Caco-2 (cell line): ENCODE measurements at regions of chr20 and their contacts with region 1.

Region 1: GRCh38 chr20:36399147-36399968 is 93.2 kb downstream of the DLGAP4 start:
- DNase-seq: peak; percentile 86 to 87
- H3K4me3 ChIP-seq: no peak overlapping the region
- H3K4me3 Mint-ChIP-seq: no peak overlapping the region
- H3K27ac Mint-ChIP-seq: no peak overlapping the region
- H3K4me1 ChIP-seq: no peaks in the 10 kb centered on the region
- H3K4me1 Mint-ChIP-seq: no peaks in the 10 kb centered on the region
- H3K27me3 ChIP-seq: no peaks in the 10 kb centered on the region
- H3K27me3 Mint-ChIP-seq: peaks cover 12% of the 10 kb centered on the region
- CTCF ChIP-seq: peak; percentile 69 to 72

Region 2: GRCh38 chr20:36199345-36200257 is 199.8 kb before region 1 on chr20:
- CTCF ChIA-PET with region 1: interaction called, 14 read pairs
- POLR2A ChIA-PET with region 1: no interaction called
- intact Hi-C with region 1: no loop called
- DNase-seq: peak; percentile 90 to 93
- H3K4me3 ChIP-seq: no peak overlapping the region
- H3K4me3 Mint-ChIP-seq: no peak overlapping the region
- H3K27ac Mint-ChIP-seq: no peak overlapping the region
- H3K4me1 ChIP-seq: no peaks in the 10 kb centered on the region
- H3K4me1 Mint-ChIP-seq: no peaks in the 10 kb centered on the region
- H3K27me3 ChIP-seq: no peaks in the 10 kb centered on the region
- H3K27me3 Mint-ChIP-seq: no peaks in the 10 kb centered on the region
- CTCF ChIP-seq: peak; percentile 99 to 100

Region 3: GRCh38 chr20:36228770-36229169 is 170.6 kb before region 1 on chr20:
- CTCF ChIA-PET with region 1: no interaction called
- POLR2A ChIA-PET with region 1: no interaction called
- intact Hi-C with region 1: no loop called
- DNase-seq: no peak
- H3K4me3 ChIP-seq: no peak overlapping the region
- H3K4me3 Mint-ChIP-seq: no peak overlapping the region
- H3K27ac Mint-ChIP-seq: no peak overlapping the region
- H3K4me1 ChIP-seq: no peaks in the 10 kb centered on the region
- H3K4me1 Mint-ChIP-seq: no peaks in the 10 kb centered on the region
- H3K27me3 ChIP-seq: no peaks in the 10 kb centered on the region
- H3K27me3 Mint-ChIP-seq: no peaks in the 10 kb centered on the region
- CTCF ChIP-seq: no peak

Region 4: DNA sequence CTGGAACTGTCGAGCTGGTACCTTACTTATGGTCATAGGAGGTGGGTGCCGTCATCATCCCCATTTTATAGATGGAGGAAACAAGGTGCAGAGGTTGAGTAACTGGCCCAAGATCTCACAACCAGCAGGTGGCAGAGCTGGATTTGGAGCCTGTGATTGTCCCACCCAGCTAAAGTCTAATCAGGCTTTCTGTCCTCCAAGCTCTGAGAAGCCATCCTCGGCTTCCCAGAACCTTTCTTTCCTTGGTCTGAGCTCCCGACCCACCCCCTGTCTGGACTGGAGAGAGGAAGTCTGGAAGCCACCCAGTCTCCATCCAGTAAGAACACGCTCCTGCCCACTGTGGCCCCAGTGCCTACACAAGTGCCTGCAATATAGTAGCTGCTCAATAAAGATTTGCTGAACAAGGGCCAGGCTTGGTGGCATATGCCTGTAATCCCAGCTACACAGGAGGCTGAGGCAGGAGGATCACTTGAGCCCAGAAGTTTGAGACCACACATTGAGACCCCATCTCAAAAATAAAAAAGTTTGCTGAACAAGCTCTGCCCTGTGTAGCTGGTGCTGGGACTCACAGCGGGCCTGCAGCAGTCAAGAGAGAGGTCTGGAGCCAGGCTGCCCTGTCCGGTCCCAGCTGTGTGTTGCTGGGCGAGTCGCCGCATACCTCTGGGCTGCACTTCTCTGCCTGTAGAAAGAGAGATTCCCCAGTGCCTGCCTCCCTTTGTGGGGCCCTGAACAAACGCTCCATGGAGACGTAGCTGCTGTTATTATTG is 125.8 kb before region 1 on chr20:
- CTCF ChIA-PET with region 1: interaction called, 31 read pairs
- POLR2A ChIA-PET with region 1: no interaction called
- intact Hi-C with region 1: loop called (anchors 5 kb)
- DNase-seq: peak; percentile 56 to 58
- H3K4me3 ChIP-seq: no peak overlapping the region
- H3K4me3 Mint-ChIP-seq: no peak overlapping the region
- H3K27ac Mint-ChIP-seq: no peak overlapping the region
- H3K4me1 ChIP-seq: no peaks in the 10 kb centered on the region
- H3K4me1 Mint-ChIP-seq: no peaks in the 10 kb centered on the region
- H3K27me3 ChIP-seq: no peaks in the 10 kb centered on the region; the same call in 1 of the 2 replicates
- H3K27me3 Mint-ChIP-seq: peaks cover 14% of the 10 kb centered on the region
- CTCF ChIP-seq: peak; percentile 57 to 70

Region 5: DNA sequence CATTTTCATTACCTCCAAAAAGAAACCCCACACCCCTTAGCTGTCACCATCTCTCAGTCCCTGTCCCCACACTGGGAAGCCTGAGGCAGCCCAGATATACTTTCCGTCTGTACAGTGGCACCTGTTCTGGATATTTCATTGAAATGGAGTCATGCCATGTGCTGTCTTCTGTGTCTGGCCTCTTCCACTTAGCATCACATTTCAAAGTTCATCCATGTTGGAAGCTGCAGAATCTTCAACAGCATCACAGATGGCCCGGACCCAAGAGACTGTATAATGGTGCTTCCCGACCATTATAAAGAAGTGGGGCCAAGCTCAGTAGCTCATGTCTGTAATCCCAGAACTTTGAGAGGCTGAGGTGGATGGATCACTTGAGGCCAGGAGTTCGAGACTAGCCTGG is 34.9 kb before region 1 on chr20:
- CTCF ChIA-PET with region 1: interaction called, 6 read pairs
- POLR2A ChIA-PET with region 1: no interaction called
- intact Hi-C with region 1: loop called (anchors 5 kb)
- DNase-seq: no peak
- H3K4me3 ChIP-seq: no peak overlapping the region
- H3K4me3 Mint-ChIP-seq: no peak overlapping the region
- H3K27ac Mint-ChIP-seq: no peak overlapping the region
- H3K4me1 ChIP-seq: peaks cover 8% of the 10 kb centered on the region
- H3K4me1 Mint-ChIP-seq: peaks cover 16% of the 10 kb centered on the region
- H3K27me3 ChIP-seq: no peaks in the 10 kb centered on the region; the same call in none of the 2 replicates
- H3K27me3 Mint-ChIP-seq: peaks cover 25% of the 10 kb centered on the region
- CTCF ChIP-seq: no peak

Region 6: GRCh38 chr20:36384022-36384619 is 15.2 kb before region 1 on chr20:
- CTCF ChIA-PET with region 1: interaction called, 10 read pairs
- POLR2A ChIA-PET with region 1: no interaction called
- intact Hi-C with region 1: no loop called
- DNase-seq: peak; percentile 78 to 90
- H3K4me3 ChIP-seq: no peak overlapping the region
- H3K4me3 Mint-ChIP-seq: no peak overlapping the region
- H3K27ac Mint-ChIP-seq: no peak overlapping the region
- H3K4me1 ChIP-seq: no peaks in the 10 kb centered on the region
- H3K4me1 Mint-ChIP-seq: no peaks in the 10 kb centered on the region
- H3K27me3 ChIP-seq: no peaks in the 10 kb centered on the region; the same call in none of the 2 replicates
- H3K27me3 Mint-ChIP-seq: peaks cover 32% of the 10 kb centered on the region
- CTCF ChIP-seq: peak; percentile 41 to 52

Region 7: DNA sequence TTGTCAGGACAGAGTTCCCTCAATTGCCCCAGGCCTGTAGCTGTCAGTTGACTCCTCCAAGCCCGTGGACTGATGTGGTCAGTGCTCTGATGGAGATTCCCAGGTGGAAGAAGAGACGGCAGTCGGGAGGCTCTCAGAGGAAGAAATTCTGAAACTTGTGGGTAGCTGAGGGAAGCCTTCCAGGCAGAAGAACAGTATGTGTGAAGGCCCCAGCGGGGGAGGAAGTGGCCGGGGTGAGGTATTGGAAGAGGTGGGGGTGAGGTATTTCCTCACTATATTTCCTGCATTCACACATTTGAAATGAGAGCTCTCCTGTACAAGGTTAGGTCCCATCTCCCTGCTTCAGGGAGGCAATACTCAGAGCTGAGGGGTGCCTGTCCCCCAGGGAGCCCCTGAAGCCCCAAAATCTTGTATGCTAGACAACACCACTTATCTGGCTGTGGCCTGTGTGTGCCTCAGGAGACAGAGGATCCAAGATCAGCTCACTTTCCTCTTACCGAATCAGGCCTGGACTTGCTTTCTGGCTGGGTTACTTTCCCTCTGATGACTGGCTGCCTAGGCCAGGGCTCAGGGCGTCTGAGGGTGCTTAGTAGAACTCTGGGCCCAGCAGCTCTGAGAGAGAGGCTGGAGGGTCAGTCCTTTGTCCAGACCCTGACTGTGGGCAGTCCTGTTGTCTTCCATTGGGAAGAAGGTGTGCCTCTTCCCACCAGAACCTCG is 92.7 kb after region 1 on chr20:
- CTCF ChIA-PET with region 1: no interaction called
- POLR2A ChIA-PET with region 1: no interaction called
- intact Hi-C with region 1: no loop called
- DNase-seq: no peak
- H3K4me3 ChIP-seq: no peak overlapping the region
- H3K4me3 Mint-ChIP-seq: no peak overlapping the region
- H3K27ac Mint-ChIP-seq: no peak overlapping the region
- H3K4me1 ChIP-seq: no peaks in the 10 kb centered on the region
- H3K4me1 Mint-ChIP-seq: no peaks in the 10 kb centered on the region
- H3K27me3 ChIP-seq: no peaks in the 10 kb centered on the region
- H3K27me3 Mint-ChIP-seq: no peaks in the 10 kb centered on the region
- CTCF ChIP-seq: no peak